ENCODE measurements at regions of chr2 and their contacts with region 1.

Region 1: DNA sequence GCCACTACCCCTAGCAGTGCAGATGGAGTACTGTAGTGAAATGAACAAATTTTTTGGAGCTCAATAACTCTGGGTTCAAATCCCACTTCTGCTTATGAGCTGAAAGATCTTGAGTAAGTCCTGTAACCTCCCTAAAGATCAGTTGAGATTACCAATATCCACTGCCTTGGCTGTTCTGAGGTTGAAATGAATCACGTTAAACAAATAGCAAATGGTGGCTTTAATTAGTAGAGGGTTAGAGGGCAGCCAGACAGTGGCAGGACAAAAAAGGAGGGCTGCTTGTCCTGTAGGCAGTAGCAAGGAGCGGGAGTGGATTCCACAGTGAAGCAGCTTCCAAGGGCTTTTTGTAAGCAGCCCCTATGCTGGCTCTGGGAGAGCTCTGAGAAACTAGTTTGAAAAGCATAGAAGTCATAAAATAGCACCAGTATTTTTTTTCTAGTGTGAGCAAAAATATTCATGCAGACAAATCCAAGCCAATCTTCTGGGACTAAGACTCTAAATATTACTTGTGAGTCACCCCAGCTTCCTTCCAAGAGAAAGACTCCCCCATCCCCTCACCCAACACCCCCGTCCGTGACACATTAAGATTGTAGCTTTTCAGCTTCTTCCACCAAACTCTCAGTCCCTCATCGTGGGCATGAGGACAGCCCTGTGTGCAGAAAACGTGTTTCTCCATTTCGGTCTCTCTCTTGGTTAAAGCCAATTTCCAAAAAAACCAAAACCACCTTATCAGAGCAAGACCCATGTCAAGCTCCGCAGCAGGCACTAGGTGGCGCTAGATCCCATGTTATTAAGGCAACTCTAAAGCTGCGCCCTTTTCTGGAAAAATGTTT is 123.5 kb upstream of the LGALSL start:
- DNase-seq: peak; percentile 60
- H3K4me3 Mint-ChIP-seq: peak overlapping the region; percentile 73
- H3K27ac Mint-ChIP-seq: peak overlapping the region; percentile 66
- H3K4me1 Mint-ChIP-seq: peaks cover 60% of the 10 kb centered on the region
- H3K27me3 Mint-ChIP-seq: peaks cover 10% of the 10 kb centered on the region

Region 2: GRCh38 chr2:63692002-63692606 is 638.4 kb before region 1 on chr2:
- intact Hi-C with region 1: loop called (anchors 5 kb)
- DNase-seq: no peak
- H3K4me3 Mint-ChIP-seq: no peak overlapping the region
- H3K27ac Mint-ChIP-seq: no peak overlapping the region
- H3K4me1 Mint-ChIP-seq: no peaks in the 10 kb centered on the region
- H3K27me3 Mint-ChIP-seq: peaks cover 4% of the 10 kb centered on the region

Region 3: DNA sequence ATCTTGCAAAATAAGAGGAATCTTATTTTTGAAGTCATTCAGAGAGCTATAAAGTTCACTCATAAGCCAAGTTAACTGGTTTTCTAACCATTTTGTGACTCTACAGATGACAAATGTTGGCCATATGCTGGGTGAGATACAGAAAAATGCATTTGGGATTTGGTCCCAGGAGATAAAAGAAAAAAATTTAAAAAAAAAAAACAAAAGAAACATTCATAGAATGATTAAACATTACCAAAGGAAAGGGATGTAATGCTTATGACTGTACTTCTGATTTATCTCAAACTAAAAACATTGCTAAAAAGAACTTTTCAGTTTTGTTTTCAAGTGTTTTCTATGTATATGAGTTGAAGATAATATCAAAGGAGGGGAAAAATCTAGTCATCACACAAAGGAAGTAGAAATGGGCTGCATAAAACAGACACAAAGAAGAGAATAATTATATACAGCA is 229.3 kb before region 1 on chr2:
- intact Hi-C with region 1: loop called (anchors 1 kb)
- DNase-seq: no peak
- H3K4me3 Mint-ChIP-seq: no peak overlapping the region
- H3K27ac Mint-ChIP-seq: peak overlapping the region; percentile 76
- H3K4me1 Mint-ChIP-seq: peaks cover 54% of the 10 kb centered on the region
- H3K27me3 Mint-ChIP-seq: no peaks in the 10 kb centered on the region

Region 4: GRCh38 chr2:64165706-64166105 is 164.8 kb before region 1 on chr2:
- intact Hi-C with region 1: loop called (anchors 1 kb)
- DNase-seq: no peak
- H3K4me3 Mint-ChIP-seq: no peak overlapping the region
- H3K27ac Mint-ChIP-seq: no peak overlapping the region
- H3K4me1 Mint-ChIP-seq: no peaks in the 10 kb centered on the region
- H3K27me3 Mint-ChIP-seq: no peaks in the 10 kb centered on the region

Region 5: GRCh38 chr2:64234145-64234544 is 96.4 kb before region 1 on chr2:
- intact Hi-C with region 1: no loop called
- DNase-seq: no peak
- H3K4me3 Mint-ChIP-seq: no peak overlapping the region
- H3K27ac Mint-ChIP-seq: no peak overlapping the region
- H3K4me1 Mint-ChIP-seq: peaks cover 8% of the 10 kb centered on the region
- H3K27me3 Mint-ChIP-seq: peaks cover 7% of the 10 kb centered on the region

Region 6: DNA sequence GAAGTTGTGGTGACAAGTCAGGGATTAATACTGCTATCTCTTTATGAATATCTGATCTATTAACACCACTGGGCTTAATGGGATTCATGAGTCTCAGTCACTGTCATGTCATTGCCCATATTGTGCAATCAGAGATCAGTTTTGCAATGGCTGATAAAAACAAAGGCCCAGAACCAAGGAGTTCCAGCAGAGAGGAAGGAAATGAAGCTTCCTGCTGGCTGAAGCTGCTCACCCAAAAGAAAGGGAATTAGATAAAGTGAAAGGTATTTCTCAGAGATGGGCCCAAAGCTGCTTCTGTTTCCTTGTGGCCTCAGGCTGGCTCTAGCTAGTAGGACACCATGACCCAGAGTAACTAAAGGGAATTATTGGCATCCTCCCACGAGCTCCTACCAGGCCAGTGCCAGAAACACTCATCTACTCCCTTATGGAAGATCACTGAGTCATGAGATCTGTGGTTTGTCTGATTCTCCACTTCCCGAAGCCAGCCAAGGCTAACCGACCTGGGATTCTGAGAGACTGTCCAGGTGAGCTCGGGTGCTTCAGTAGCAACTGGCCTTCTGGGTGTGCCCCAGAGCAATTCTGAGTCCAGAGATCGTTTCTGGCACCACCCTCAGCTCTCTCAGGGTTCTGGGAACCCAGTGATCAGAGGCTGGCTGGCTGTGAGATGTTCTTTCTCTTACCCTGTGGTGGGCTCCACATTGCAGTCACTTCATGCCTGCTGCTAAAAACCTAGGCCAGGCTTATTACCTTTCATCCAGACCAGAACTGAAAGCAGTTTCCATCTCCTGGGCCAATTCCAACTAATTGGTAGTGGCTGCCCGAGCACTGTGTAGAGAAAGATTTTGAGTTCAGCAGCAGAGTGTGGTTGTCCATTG is 56.7 kb before region 1 on chr2:
- intact Hi-C with region 1: no loop called
- DNase-seq: no peak
- H3K4me3 Mint-ChIP-seq: no peak overlapping the region
- H3K27ac Mint-ChIP-seq: no peak overlapping the region
- H3K4me1 Mint-ChIP-seq: peaks cover 20% of the 10 kb centered on the region
- H3K27me3 Mint-ChIP-seq: no peaks in the 10 kb centered on the region

Region 7: DNA sequence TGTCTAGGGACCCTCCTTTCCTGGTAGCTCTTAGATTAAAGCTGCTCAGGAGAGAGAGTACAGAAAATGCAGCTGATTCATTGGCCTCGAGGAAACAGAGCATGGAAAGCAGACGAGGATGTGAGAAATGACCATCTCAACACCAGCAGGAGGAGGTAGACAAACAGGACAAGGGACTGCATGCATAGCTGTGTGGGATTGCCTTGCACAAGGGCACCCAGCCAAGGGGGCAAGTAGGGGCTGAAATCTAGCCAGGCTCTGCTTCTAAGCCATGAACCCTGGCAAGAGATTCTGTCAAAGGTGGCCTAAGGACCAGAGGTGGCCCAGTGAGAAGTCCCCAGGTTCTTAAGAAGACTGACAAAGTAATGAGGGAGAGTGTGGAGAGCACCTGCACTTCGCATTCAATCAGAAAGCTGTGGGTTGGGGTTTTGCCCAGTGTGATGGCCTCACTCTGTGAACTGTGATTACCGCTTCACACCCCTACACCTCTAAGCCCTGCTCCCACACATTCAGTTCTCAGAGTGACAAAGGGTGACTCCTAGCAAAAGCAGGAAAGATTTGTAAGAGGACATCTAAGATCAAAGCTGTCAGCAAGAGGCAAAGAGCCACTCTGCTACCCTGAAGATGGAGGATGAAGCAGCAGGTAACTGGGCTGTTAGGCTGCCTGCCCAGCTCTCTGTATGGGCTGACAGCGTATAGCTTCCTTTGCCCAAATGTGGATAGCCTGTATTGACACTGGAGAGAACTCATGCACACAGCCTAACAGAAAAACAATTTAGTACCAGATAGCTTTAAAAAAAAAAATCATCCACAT is 35.0 kb before region 1 on chr2:
- intact Hi-C with region 1: loop called (anchors 1 kb)
- DNase-seq: peak; percentile 23
- H3K4me3 Mint-ChIP-seq: no peak overlapping the region
- H3K27ac Mint-ChIP-seq: peak overlapping the region; percentile 59
- H3K4me1 Mint-ChIP-seq: peaks cover 34% of the 10 kb centered on the region
- H3K27me3 Mint-ChIP-seq: peaks cover 12% of the 10 kb centered on the region

Region 8: DNA sequence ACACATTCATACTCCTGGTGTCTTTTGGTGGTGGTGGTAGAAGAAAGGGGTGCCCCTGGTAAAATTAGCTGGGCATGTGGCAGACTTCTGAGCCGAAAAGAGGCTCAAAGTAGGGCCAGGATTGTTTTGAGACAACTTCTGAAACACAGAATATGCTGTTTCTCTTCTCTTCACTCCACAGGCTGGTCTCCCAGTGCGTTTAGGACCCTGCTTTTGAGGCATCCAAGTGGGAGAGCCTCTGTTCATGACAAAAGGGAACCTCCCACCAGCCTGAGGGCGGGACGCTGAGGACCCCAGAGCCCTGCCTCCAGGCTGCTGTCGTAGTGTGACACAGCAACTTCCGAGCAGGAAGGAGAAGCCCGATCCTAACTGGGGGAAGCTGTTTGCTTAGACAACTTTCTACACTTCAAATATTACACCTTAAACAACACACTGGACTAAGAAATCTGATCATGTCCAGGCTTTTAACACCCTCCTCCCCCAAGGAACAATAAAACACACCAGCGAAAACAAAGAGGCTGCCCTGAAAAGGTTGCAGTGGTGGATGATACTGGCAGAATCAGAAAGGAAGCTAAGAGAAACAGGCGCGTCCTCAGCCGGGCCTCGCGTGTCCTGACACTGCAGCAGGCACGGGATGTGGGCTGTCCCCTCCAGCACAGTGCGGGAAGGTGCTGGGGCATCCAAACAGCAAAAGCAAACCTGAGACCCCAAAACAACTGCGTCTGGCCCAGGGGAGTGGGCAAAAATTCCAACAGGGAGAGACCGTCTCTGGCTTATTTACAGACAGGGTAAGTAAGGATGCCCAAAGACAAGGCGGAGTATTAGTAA is 313.9 kb after region 1 on chr2:
- intact Hi-C with region 1: loop called (anchors 2 kb)
- DNase-seq: peak; percentile 51
- H3K4me3 Mint-ChIP-seq: peak overlapping the region; percentile 86
- H3K27ac Mint-ChIP-seq: peak overlapping the region; percentile 90
- H3K4me1 Mint-ChIP-seq: peaks cover 82% of the 10 kb centered on the region
- H3K27me3 Mint-ChIP-seq: peaks cover 3% of the 10 kb centered on the region

Region 9: DNA sequence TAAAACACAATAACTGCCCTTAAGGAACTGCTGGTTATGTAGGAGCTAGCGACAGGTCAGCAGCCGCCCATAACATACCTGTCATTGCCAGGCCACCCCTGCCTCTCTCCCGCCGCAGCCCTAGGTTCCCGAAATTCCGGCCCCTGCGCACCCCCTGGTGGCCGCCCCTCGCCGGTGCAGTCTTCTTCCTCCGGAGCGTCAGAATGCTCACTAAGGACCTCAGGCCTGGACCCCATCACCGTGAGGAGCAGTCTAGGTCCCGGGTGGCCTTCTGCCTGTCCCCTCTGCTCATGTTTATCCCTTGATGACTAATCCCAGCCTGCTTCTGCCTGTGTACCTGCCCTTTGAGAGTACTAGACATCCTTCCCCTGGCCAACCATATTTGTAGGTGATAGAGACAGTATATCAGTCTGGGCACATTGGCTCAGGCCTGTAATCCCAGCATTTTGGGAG is 543.0 kb after region 1 on chr2:
- intact Hi-C with region 1: loop called (anchors 1 kb)
- DNase-seq: peak; percentile 74
- H3K4me3 Mint-ChIP-seq: no peak overlapping the region
- H3K27ac Mint-ChIP-seq: no peak overlapping the region
- H3K4me1 Mint-ChIP-seq: peaks cover 8% of the 10 kb centered on the region
- H3K27me3 Mint-ChIP-seq: peaks cover 26% of the 10 kb centered on the region